ENCODE measurements at regions of chr11 and their contacts with region 1.

Region 1: DNA sequence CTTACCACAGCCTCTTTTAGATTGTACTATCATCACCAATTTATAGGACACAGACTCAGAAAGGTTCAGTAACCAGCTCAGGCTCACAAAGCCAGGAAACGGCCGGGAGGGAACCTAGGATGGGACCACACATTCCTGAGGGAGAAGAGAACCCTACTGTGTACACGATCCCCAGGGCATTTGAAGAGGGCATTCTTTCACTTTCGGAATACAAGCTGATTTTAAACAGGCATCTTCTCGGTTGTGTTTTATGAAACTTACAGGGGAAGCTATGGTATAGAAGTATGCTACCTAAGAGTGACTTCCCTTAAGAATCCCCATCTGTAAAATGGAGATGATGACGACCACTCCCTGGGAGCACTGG is 19.0 kb downstream of the SMCO4 start:
- DNase-seq: no peak
- H3K4me3 Mint-ChIP-seq: peak overlapping the region; percentile 48
- H3K27ac Mint-ChIP-seq: peak overlapping the region; percentile 80
- H3K4me1 Mint-ChIP-seq: peaks cover 90% of the 10 kb centered on the region
- H3K27me3 Mint-ChIP-seq: no peaks in the 10 kb centered on the region

Region 2: DNA sequence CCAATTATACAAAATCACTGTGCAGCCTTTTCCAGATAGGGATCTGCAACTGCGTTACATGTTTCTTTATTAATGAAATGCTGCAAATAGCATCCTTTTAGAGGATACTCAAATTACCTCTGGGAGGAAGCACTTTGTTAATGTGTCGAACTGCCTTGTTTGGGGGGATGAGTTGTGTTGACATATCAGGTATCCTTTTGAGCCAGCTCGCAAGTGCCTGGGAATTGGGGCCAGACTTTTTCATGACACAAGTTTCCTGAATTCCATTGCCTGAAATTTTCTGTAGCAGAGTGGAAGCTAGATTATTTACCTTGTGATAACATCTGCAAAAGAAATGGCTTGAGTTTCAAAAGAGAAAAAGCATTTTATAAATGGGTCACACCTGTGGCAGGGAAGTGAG is 853.8 kb before region 1 on chr11:
- intact Hi-C with region 1: no loop called
- DNase-seq: no peak
- H3K4me3 Mint-ChIP-seq: no peak overlapping the region
- H3K27ac Mint-ChIP-seq: no peak overlapping the region
- H3K4me1 Mint-ChIP-seq: no peaks in the 10 kb centered on the region
- H3K27me3 Mint-ChIP-seq: no peaks in the 10 kb centered on the region

Region 3: GRCh38 chr11:93487032-93487483 is 37.1 kb before region 1 on chr11:
- intact Hi-C with region 1: no loop called
- DNase-seq: no peak
- H3K4me3 Mint-ChIP-seq: no peak overlapping the region
- H3K27ac Mint-ChIP-seq: no peak overlapping the region
- H3K4me1 Mint-ChIP-seq: peaks cover 1% of the 10 kb centered on the region
- H3K27me3 Mint-ChIP-seq: no peaks in the 10 kb centered on the region

Region 4: GRCh38 chr11:93512073-93512475 is 12.1 kb before region 1 on chr11:
- intact Hi-C with region 1: loop called (anchors 1 kb)
- DNase-seq: peak; percentile 25
- H3K4me3 Mint-ChIP-seq: peak overlapping the region; percentile 62
- H3K27ac Mint-ChIP-seq: peak overlapping the region; percentile 95
- H3K4me1 Mint-ChIP-seq: peaks cover 45% of the 10 kb centered on the region
- H3K27me3 Mint-ChIP-seq: no peaks in the 10 kb centered on the region